HCT116 (cell line): ENCODE measurements at regions of chr16 and their contacts with region 1.

Region 1: DNA sequence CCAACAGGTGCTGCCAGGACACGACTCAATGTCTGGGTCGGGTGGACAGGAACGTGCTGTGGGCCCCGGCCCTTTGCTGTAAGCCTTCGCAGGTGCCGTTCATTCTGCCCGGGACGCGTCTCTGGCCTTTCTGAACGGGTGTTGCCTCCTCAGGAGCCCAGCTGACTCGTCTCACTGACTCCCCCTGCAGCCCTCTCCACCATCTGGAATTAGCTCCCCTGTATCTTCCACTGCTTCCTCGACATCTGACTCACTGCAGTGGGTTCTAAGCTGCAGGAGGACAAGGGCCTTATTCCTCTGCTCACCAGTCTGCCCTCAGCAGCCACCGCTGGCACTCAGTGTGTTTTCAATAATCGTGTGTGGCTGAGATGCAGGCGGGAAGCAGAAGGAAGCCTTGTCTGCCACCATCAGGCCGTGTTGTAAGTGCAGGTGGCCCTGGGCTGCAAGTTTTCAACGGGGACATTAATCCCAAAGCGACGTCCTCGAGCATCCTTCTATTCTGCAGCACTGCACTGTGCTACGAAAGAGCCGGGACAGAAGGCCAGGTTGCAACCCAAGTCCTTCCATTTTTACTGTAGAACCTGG is 256.2 kb downstream of the FOXL1 start:
- DNase-seq: no peak
- ATAC-seq: peak; percentile 86
- H3K4me3 ChIP-seq: no peak overlapping the region
- H3K27ac ChIP-seq: no peak overlapping the region
- H3K4me1 ChIP-seq: 0 out of 4 replicates have a peak, but pooled peaks cover 0 to 4% of the 10 kb centered on the region in 2 experiments
- H3K27me3 ChIP-seq: peaks cover 23% of the 10 kb centered on the region
- CTCF ChIP-seq: peak; percentile 48 to 81 (median 63)
- POLR2A ChIP-seq: no peak
- RAD21 ChIP-seq: peak; percentile 59

Region 2: GRCh38 chr16:86618811-86619794 is 215.4 kb before region 1 on chr16:
- CTCF ChIA-PET with region 1: no interaction called
- POLR2A ChIA-PET with region 1: no interaction called
- RAD21 ChIA-PET with region 1: no interaction called
- intact Hi-C with region 1: loop called (anchors 5 kb)
- DNase-seq: no peak
- ATAC-seq: peak; percentile 80
- H3K4me3 ChIP-seq: no peak overlapping the region
- H3K27ac ChIP-seq: no peak overlapping the region
- H3K4me1 ChIP-seq: peaks cover 0 to 8% of the 10 kb centered on the region in 2 experiments; a peak in 1 of 4 replicates
- H3K27me3 ChIP-seq: no peaks in the 10 kb centered on the region
- CTCF ChIP-seq: no peak
- POLR2A ChIP-seq: no peak
- RAD21 ChIP-seq: no peak

Region 3: DNA sequence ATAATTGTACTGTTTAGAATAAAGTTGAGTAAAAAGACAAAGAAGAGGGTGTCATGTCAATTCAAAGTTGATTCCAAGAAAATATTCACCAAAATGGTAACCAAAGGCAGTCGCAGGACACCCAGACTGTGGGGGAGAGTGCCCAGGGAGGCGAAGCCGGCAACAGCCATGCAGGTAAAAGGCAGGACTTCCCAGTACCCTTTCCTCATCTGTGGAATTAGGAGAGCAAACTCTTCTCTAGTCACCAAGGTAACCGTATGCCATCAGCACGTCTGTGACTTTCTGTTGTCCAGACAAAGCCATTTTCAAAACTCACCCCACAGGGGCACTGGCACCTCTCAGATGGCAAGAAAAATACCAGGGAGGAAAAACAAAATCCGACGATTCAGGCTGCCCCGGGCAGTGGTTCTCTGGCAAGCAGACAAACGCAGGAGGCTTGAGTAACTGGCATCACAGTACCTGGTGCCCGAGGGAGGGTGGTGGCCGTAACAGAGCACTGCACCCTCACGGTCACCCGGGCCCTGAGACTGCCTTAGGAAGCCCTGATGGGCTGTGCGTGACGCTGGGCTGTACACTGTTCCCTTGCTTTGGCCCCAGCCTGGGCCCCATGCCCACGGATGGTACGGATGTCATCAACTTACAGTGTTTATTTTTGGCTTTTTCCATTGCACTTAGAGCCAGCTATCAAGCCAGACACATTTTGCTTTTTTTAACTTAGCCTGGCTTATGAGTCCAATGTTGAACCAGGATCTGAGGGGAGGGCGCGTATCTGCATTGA is 31.2 kb after region 1 on chr16:
- CTCF ChIA-PET with region 1: no interaction called
- POLR2A ChIA-PET with region 1: no interaction called
- RAD21 ChIA-PET with region 1: no interaction called
- intact Hi-C with region 1: no loop called
- DNase-seq: no peak
- ATAC-seq: peak; percentile 63
- H3K4me3 ChIP-seq: no peak overlapping the region
- H3K27ac ChIP-seq: no peak overlapping the region
- H3K4me1 ChIP-seq: no peaks in the 10 kb centered on the region
- H3K27me3 ChIP-seq: peaks cover 33% of the 10 kb centered on the region; the same call in 1 of the 2 replicates
- CTCF ChIP-seq: peak in 1 of 3 experiments; percentile 11; a peak in 1 of 6 replicates
- POLR2A ChIP-seq: no peak
- RAD21 ChIP-seq: no peak

Region 4: GRCh38 chr16:87076950-87077749 is 242.6 kb after region 1 on chr16:
- CTCF ChIA-PET with region 1: interaction called, 4 read pairs
- POLR2A ChIA-PET with region 1: no interaction called
- RAD21 ChIA-PET with region 1: no interaction called
- intact Hi-C with region 1: loop called (anchors 5 kb)
- DNase-seq: peak; percentile 94
- ATAC-seq: peak; percentile 97
- H3K4me3 ChIP-seq: peak overlapping the region; percentile 27 to 42
- H3K27ac ChIP-seq: peak overlapping the region; percentile 40
- H3K4me1 ChIP-seq: peaks cover 7 to 14% of the 10 kb centered on the region in 2 experiments; a peak in 3 of 4 replicates
- H3K27me3 ChIP-seq: no peaks in the 10 kb centered on the region
- CTCF ChIP-seq: peak; percentile 86 to 100 (median 99)
- POLR2A ChIP-seq: no peak
- RAD21 ChIP-seq: peak; percentile 91

Region 5: GRCh38 chr16:87278191-87279095 is 443.9 kb after region 1 on chr16:
- CTCF ChIA-PET with region 1: no interaction called
- POLR2A ChIA-PET with region 1: no interaction called
- RAD21 ChIA-PET with region 1: no interaction called
- intact Hi-C with region 1: loop called (anchors 5 kb)
- DNase-seq: peak; percentile 52
- ATAC-seq: peak; percentile 99
- H3K4me3 ChIP-seq: no peak overlapping the region
- H3K27ac ChIP-seq: no peak overlapping the region
- H3K4me1 ChIP-seq: peaks cover 0 to 8% of the 10 kb centered on the region in 2 experiments; a peak in 1 of 4 replicates
- H3K27me3 ChIP-seq: no peaks in the 10 kb centered on the region
- CTCF ChIP-seq: peak; percentile 97 to 99 (median 97)
- POLR2A ChIP-seq: no peak
- RAD21 ChIP-seq: peak; percentile 99